ENCODE measurements at regions of chr7 and their contacts with region 1.

Region 1: GRCh38 chr7:35657125-35657524 is 37.8 kb downstream of the HERPUD2 start:
- DNase-seq: no peak
- H3K4me3 Mint-ChIP-seq: no peak overlapping the region
- H3K27ac Mint-ChIP-seq: peak overlapping the region; percentile 44
- H3K4me1 Mint-ChIP-seq: peaks cover 54% of the 10 kb centered on the region
- H3K27me3 Mint-ChIP-seq: no peaks in the 10 kb centered on the region

Region 2: GRCh38 chr7:35646289-35647023 is 10.7 kb before region 1 on chr7:
- CTCF ChIA-PET with region 1: no interaction called
- intact Hi-C with region 1: no loop called
- DNase-seq: peak; percentile 14
- H3K4me3 Mint-ChIP-seq: no peak overlapping the region
- H3K27ac Mint-ChIP-seq: peak overlapping the region; percentile 47
- H3K4me1 Mint-ChIP-seq: peaks cover 56% of the 10 kb centered on the region
- H3K27me3 Mint-ChIP-seq: no peaks in the 10 kb centered on the region

Region 3: DNA sequence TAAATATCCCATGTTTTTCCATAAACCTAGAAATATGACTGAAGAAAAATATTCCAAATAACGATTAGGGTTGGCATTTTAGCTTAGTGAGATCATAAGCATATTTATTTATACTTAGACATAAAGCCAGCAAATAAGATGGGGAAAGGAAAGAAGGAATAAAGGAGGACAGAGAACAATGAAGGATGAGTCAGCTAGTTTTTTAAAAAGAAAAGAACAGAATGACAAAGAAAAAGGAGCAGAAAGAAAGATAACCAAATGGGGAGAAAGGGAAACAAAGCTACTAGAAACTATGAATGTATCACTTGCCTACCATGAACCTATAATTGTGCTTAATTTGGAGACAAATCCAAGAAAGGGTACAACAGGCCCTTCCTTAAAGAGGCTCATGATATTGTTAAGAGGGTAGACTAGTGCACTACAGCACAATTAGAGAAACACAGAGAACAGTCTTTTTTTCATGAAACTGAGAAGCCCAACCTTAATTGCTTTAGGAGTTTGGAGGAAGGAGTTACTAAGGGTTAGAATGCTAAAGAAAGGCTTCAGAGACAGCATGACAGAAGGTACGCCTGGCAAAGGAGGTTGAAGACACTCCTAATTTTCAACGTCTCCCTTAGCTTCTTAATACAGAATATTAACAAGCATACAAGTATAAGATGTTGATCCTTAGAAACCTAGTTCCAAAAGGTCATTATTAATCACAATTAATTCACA is 13.9 kb after region 1 on chr7:
- CTCF ChIA-PET with region 1: no interaction called
- intact Hi-C with region 1: no loop called
- DNase-seq: no peak
- H3K4me3 Mint-ChIP-seq: no peak overlapping the region
- H3K27ac Mint-ChIP-seq: no peak overlapping the region
- H3K4me1 Mint-ChIP-seq: peaks cover 19% of the 10 kb centered on the region
- H3K27me3 Mint-ChIP-seq: no peaks in the 10 kb centered on the region

Region 4: GRCh38 chr7:35681231-35682029 is 24.3 kb after region 1 on chr7:
- CTCF ChIA-PET with region 1: no interaction called
- intact Hi-C with region 1: loop called (anchors 1 kb)
- DNase-seq: no peak
- H3K4me3 Mint-ChIP-seq: peak overlapping the region; percentile 4
- H3K27ac Mint-ChIP-seq: no peak overlapping the region
- H3K4me1 Mint-ChIP-seq: peaks cover 61% of the 10 kb centered on the region
- H3K27me3 Mint-ChIP-seq: no peaks in the 10 kb centered on the region